Heart right ventricle (tissue), 16 donors: ENCODE measurements at regions of chr10 and their contacts with region 1.

Region 1: DNA sequence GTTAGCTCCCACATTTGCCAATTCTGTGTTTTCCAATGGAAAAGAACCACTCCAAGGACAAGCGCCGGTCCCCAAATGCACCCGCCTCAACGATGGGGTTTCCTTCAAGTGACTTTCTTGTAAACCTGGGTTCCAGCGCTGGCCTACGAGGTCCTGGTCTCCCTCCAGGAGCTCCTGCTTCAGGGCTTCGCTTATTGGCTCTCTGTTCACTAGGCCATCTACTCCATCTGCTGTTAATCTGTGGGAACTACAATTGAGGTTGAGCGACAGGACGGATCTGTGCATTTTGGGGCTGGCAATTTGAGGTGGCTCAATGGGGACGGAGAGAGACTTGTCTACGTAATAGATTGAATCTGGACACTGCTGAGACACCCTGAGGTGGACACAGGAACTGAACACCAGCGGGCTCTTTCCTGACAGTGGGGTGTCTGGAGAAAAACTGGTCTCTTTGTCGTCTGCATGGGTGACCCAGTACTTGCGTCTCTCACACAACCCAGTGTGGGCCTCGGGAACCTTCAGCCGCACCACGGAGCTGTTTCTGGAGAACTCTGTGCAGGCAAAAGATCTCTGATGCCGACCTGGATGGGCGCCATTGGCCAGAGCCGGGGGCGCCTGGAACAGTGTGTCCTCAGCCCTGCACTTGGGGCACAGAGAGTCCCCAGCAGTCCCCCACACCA is 115.9 kb upstream of the ADAM12 start:
- DNase-seq: peak in 1 of 2 donors; percentile 28
- ATAC-seq: peak in 5 of 8 donors; percentile 44 to 61 (median 48)
- H3K4me3 ChIP-seq: no peak overlapping the region
- H3K27ac ChIP-seq: no peak overlapping the region
- H3K4me1 ChIP-seq: no peaks in the 10 kb centered on the region
- H3K27me3 ChIP-seq: peaks cover 0 to 13% (median 4%) of the 10 kb centered on the region in 7 donors
- CTCF ChIP-seq: peak; percentile 38 to 81 (median 68)

Region 2: DNA sequence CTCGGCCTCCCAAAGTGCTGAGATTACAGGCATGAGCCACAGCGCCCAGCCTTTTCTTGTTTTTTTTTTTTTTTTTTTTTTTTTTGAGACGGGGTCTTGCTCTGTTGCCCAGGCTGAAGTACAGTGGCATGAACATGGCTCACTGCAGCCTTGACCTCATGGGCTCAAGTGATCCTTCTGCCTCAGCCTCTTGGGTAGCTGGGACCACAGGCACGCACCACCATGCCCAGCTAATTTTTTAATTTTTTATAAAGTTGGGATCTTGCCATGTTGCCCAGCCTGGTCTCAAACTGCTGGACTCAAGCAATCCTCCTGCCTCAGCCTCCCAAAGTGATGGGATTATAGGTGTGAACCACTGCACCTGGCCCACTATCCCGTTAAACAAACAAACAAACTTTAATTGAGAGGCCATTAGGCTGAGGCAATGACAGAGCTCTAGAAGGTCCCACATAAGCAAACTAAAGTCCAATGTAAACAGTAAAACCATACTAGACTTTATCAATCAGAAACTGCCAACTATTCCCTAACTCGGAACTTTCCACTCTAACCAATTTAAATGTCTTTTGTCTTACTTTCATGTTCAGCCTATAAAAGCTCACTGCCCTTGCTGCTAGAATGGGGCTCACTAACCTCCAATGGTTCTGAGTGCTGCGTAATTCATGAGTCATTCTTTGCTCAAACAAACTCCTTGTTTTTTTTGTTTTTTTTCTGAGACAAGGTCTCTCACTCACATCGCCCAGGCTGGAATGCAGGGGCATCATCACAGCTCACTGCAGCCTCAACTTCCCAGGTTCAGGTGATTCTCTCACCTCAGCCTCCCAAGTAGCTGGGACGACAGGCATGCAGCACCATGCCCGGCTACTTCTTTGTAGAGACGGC is 625.0 kb before region 1 on chr10:
- intact Hi-C with region 1: loop called in 1 of 10 experiments (anchors 10 kb)
- DNase-seq: no peak
- ATAC-seq: no peak
- H3K4me3 ChIP-seq: peak overlapping the region in 6 of 10 donors; percentile 4 to 40 (median 28)
- H3K27ac ChIP-seq: no peak overlapping the region
- H3K4me1 ChIP-seq: peaks cover 0 to 32% (median 10%) of the 10 kb centered on the region in 9 donors
- H3K27me3 ChIP-seq: no peaks in the 10 kb centered on the region
- CTCF ChIP-seq: no peak

Region 3: DNA sequence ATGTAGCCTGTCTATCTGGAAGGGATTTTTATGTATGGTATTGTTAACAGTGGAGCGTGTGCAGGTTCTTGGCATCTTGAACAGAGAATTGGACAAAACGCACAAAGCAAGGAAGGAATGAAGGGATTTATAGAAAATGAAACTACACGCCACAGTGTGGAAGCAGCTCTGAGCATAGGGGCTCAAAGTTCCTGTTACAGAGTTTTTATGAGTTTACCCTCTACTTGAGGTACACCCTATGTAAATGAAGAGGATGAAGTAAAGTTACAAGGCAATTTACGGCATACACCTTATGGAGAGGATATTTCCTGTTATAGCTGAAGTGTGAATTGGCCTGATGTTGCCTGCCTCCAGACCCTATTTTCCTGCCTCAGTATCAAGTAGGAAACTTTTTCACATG is 574.6 kb before region 1 on chr10:
- intact Hi-C with region 1: loop called in 2 of 10 experiments (anchors 5 kb)
- DNase-seq: no peak
- ATAC-seq: no peak
- H3K4me3 ChIP-seq: no peak overlapping the region
- H3K27ac ChIP-seq: no peak overlapping the region
- H3K4me1 ChIP-seq: no peaks in the 10 kb centered on the region
- H3K27me3 ChIP-seq: no peaks in the 10 kb centered on the region
- CTCF ChIP-seq: no peak

Region 4: GRCh38 chr10:125976960-125977603 is 527.1 kb before region 1 on chr10:
- intact Hi-C with region 1: loop called (anchors 1 to 5 kb)
- DNase-seq: no peak
- ATAC-seq: no peak
- H3K4me3 ChIP-seq: no peak overlapping the region
- H3K27ac ChIP-seq: no peak overlapping the region
- H3K4me1 ChIP-seq: peaks cover 0 to under 1% (median 0%) of the 10 kb centered on the region in 9 donors
- H3K27me3 ChIP-seq: peaks cover 0 to 7% (median 0%) of the 10 kb centered on the region in 7 donors
- CTCF ChIP-seq: no peak

Region 5: DNA sequence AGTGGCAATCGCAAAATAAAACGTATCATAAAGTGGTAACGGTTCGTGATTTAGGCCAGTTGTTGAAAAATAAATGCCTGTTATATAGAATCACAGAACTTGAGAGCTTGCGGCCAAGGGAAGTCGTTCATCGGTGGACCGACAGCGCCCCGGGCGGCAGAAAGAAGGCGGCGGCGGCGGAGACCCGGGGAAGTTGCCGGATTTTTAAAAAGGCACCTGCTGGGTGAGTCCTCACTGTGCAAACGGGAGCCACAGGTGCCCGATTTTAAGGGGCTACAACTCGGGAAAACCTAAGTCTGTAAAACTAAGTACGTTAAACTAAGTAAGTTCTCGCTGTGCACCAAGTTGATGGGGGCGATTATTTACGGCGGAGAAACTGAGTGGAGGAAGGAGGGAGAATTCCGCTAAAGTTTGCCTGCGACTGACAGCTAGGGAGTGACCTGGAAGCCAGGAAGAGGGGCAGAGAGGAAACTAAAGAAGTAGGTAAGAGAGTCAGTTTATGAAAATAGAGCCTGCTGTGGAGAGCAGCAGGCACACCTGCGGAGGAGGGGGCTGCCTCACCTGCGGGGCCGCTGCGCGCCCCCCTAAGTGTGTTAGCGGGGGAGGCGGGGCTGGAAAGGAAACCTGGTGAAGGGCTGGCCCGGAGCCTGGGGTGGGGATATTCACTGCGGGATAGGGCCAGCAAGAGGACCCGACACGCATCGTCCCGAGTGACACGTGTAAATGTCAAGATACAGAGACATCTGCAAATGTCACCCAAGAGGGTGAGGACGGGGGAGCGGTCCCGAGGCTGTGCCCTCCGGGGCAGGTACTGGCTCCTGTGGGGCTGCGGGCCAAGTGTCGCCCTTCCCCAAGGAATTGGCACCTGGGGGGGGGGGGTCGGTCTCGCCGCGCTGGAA is 116.9 kb before region 1 on chr10:
- intact Hi-C with region 1: loop called in 2 of 10 experiments (anchors 5 kb)
- DNase-seq: peak; percentile 42 to 49
- ATAC-seq: peak in 6 of 8 donors; percentile 39 to 78 (median 56)
- H3K4me3 ChIP-seq: peak overlapping the region; percentile 18 to 62 (median 52)
- H3K27ac ChIP-seq: peak overlapping the region in 5 of 10 donors; percentile 5 to 78 (median 51)
- H3K4me1 ChIP-seq: peaks cover 3 to 23% (median 6%) of the 10 kb centered on the region in 9 donors
- H3K27me3 ChIP-seq: peaks cover 0 to 71% (median 55%) of the 10 kb centered on the region in 7 donors
- CTCF ChIP-seq: peak; percentile 27 to 83 (median 71)

Region 6: GRCh38 chr10:126609566-126609965 is 105.4 kb after region 1 on chr10:
- intact Hi-C with region 1: no loop called
- DNase-seq: no peak
- ATAC-seq: no peak
- H3K4me3 ChIP-seq: no peak overlapping the region
- H3K27ac ChIP-seq: no peak overlapping the region
- H3K4me1 ChIP-seq: no peaks in the 10 kb centered on the region
- H3K27me3 ChIP-seq: peaks cover 0 to 8% (median 0%) of the 10 kb centered on the region in 7 donors
- CTCF ChIP-seq: no peak